ENCODE measurements at regions of chr11 and their contacts with region 1.

Region 1: GRCh38 chr11:113201054-113201818 is 113.1 kb upstream of the TTC12 start:
- DNase-seq: peak in 9 of 10 donors; percentile 52 to 86 (median 76)
- H3K4me3 ChIP-seq: no peak overlapping the region
- H3K27ac ChIP-seq: peak overlapping the region in 57 of 59 donors; percentile 7 to 89 (median 70)
- H3K27me3 ChIP-seq: no peaks in the 10 kb centered on the region
- CTCF ChIP-seq: no peak

Region 2: GRCh38 chr11:113249491-113249763 is 48.2 kb after region 1 on chr11:
- intact Hi-C with region 1: loop called in 1 of 2 experiments (anchors 5 kb)
- DNase-seq: no peak
- H3K4me3 ChIP-seq: no peak overlapping the region
- H3K27ac ChIP-seq: peak overlapping the region in 42 of 59 donors; percentile 0 to 74 (median 44)
- H3K27me3 ChIP-seq: no peaks in the 10 kb centered on the region
- CTCF ChIP-seq: peak in 40 of 56 donors; percentile 9 to 59 (median 34)

Measured in dorsolateral prefrontal cortex (tissue), 120 donors.